Common myeloid progenitor, CD34-positive (primary cell): ENCODE measurements at regions of chr11 and their contacts with region 1.

Region 1: DNA sequence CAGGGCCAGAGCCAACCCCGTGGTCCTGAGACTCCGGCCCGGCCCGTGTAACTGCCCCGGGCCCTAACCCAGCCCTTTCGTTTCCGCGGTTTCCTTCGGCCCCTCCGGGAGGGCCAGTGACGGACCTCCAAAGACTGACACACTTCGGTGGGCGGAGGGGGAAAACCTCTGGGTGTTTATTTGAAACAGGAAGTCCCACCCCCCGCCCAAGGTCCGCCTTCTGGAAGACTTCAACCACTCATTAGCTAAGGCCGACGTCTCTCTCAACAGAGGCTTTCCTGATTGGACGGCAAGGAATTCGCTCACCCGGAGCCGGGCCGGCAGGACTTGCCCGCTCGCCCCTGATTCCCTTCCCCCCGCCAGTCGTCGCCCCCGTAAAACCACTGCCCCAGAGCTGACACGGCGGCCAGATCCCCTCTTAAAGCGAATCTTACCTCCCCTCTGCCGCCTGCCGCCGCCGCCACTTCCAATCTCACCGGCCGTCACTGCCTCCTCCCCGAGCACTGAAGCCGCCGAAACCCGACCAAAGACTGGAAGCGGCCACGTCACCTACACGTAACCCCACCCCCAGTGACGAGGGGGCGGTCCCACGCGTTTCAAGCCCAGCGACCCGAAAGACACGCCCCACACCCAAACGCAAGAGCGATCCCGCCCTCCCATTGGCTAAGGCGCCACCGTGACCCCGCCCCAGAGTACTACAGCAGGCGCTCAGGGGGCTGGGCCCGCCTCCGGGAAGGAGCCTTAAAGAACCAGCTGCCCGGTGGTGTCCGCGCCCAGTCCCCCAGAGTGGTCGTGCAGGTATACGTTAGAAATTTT is at the start of gene STX5:
- DNase-seq: peak; percentile 98 to 99 (median 99)
- H3K4me3 ChIP-seq: peak within 1 kb of the TSS; percentile 71 to 93 (median 89)
- H3K27ac ChIP-seq: peak within 1 kb of the TSS; percentile 95 to 96
- H3K4me1 ChIP-seq: peaks cover 8 to 28% (median 19%) of the 10 kb centered on the region in 4 experiments
- H3K27me3 ChIP-seq: no peaks in the 10 kb centered on the region

Region 2: DNA sequence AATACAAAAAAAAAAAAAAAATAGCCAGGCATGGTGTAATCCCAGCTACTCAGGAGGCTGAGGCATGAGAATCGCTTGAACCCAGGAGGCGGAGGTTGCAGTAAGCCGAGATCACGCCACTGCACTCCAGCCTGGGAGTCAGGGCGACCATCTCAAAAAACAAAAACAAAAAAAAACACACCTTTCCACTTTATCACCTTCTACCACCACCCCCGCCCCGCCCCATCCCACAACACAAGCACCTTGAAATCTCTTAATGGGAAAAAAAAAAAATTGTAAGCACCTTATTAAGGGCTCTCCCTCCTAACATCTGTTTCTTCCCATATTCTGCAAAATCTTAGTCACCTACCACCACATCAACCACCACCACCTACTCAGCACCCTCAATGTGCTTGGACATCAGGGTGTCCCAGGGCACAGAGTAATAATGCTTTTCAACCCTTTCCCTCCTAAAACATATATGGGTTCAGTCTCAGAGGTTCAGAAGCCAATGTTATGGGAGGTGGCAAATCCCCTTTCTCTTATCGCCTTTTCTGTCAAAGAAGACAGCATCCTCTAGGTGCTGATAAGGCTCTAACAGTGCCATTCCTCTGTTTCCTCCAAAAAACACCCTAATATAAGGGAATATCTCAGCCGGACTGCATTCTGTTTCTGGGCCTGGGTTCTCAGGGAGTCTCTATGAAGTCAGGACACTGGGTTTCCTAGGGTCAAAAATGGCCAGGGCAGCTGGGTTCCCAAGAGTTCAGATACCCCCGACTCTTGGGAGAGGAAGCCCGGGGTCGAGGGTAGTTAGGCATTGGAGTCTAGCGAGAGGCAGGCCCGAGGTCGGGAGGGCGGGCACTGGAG is 179.3 kb before region 1 on chr11:
- CTCF ChIA-PET with region 1: no interaction called
- POLR2A ChIA-PET with region 1: no interaction called
- DNase-seq: peak in 2 of 3 donors; percentile 7 to 13
- H3K4me3 ChIP-seq: peak overlapping the region; percentile 81 to 97 (median 94)
- H3K27ac ChIP-seq: peak overlapping the region; percentile 89 to 94
- H3K4me1 ChIP-seq: peaks cover 0 to 21% (median 14%) of the 10 kb centered on the region in 4 experiments
- H3K27me3 ChIP-seq: no peaks in the 10 kb centered on the region

Region 3: DNA sequence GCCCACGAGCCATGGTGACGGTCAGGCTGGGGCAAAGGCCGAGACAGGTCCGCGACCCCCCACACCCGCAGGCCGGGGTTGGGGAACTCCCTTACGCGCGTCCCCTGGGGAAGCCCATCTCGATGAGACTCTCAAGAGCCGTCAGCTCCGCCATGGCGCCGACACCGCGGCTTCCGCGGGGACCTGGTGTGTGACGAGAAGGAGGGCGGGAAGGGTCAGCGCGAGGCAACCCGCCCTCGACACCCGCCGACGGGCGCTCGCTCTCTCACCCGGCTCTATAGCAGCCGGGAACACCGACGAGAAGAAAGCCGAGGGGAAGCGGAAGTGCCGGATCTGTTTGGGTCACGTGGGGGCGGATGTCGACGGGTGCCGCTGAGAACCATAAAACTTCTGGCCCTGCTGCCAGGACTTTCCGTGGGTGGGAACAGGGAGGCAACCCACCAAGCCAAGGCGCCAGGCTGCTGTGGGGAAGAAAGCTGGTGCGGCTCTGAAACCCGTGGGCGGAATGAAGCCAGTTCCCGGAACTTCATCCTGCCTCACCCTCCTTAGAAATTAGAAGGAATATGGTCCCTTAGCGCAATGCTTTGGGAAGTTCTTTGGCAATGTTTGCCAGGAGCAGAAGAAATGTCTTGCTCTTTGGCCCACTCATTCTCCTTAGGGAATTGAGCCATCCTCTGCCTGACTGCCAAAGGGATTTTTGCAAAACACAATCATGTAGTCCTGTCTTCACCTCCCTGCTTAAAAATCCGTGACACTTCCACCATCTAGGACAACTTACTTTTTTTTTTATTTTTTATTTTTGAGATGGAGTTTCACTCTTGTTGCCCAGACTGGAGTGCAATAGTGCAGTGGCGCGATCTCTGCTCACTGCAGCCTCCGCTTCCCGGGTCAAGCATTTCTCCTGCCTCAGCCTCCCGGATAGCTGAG is 152.7 kb before region 1 on chr11 and contains the start of gene UBXN1:
- CTCF ChIA-PET with region 1: no interaction called
- POLR2A ChIA-PET with region 1: no interaction called
- DNase-seq: peak; percentile 90 to 92 (median 90)
- H3K4me3 ChIP-seq: peak within 1 kb of the TSS; percentile 71 to 96 (median 90)
- H3K27ac ChIP-seq: peak within 1 kb of the TSS; percentile 93 to 96
- H3K4me1 ChIP-seq: peaks cover 2 to 26% (median 16%) of the 10 kb centered on the region in 4 experiments
- H3K27me3 ChIP-seq: no peaks in the 10 kb centered on the region

Region 4: GRCh38 chr11:62726915-62727763 is 104.6 kb before region 1 on chr11 and contains the start of gene HNRNPUL2:
- CTCF ChIA-PET with region 1: no interaction called
- POLR2A ChIA-PET with region 1: interaction called, 10 read pairs
- DNase-seq: peak; percentile 100
- H3K4me3 ChIP-seq: peak within 1 kb of the TSS; percentile 83 to 100 (median 89)
- H3K27ac ChIP-seq: peak within 1 kb of the TSS; percentile 84 to 95
- H3K4me1 ChIP-seq: peaks cover 23 to 47% (median 41%) of the 10 kb centered on the region in 4 experiments
- H3K27me3 ChIP-seq: no peaks in the 10 kb centered on the region

Region 5: GRCh38 chr11:62747475-62748160 is 84.1 kb before region 1 on chr11:
- CTCF ChIA-PET with region 1: no interaction called
- POLR2A ChIA-PET with region 1: no interaction called
- DNase-seq: no peak
- H3K4me3 ChIP-seq: no peak overlapping the region
- H3K27ac ChIP-seq: no peak overlapping the region
- H3K4me1 ChIP-seq: peaks cover 0 to 8% (median 4%) of the 10 kb centered on the region in 4 experiments
- H3K27me3 ChIP-seq: no peaks in the 10 kb centered on the region

Region 6: DNA sequence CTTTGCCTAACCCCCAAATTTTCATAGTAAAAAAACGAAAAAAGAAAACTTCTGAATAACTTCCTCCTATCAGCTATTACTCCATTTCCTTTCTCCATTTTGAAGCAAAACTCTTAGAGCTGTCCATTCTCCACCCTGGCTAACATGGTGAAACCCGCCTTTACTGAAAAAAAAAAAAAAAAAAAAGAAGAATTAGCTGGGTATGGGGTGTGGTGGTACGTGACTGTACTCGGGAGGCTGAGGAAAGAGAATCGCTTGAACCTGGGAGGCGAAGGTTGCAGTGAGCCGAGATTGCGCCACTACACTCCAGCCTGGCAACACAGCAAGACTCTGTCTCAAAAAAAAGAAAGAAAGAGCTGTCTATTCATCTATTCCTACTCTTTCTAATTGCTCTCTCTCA is 15.2 kb before region 1 on chr11:
- CTCF ChIA-PET with region 1: interaction called, 16 read pairs
- POLR2A ChIA-PET with region 1: interaction called, 5 read pairs
- DNase-seq: no peak
- H3K4me3 ChIP-seq: no peak overlapping the region
- H3K27ac ChIP-seq: no peak overlapping the region
- H3K4me1 ChIP-seq: no peaks in the 10 kb centered on the region
- H3K27me3 ChIP-seq: no peaks in the 10 kb centered on the region

Region 7: GRCh38 chr11:62889484-62890437 is 58.0 kb after region 1 on chr11:
- CTCF ChIA-PET with region 1: no interaction called
- POLR2A ChIA-PET with region 1: no interaction called
- DNase-seq: no peak
- H3K4me3 ChIP-seq: no peak overlapping the region
- H3K27ac ChIP-seq: no peak overlapping the region
- H3K4me1 ChIP-seq: peaks cover 0 to 11% (median 0%) of the 10 kb centered on the region in 4 experiments
- H3K27me3 ChIP-seq: no peaks in the 10 kb centered on the region